G401 (cell line): ENCODE measurements at regions of chr19 and their contacts with region 1.

Region 1: GRCh38 chr19:46697204-46697960 is 19.5 kb downstream of the PRKD2 start:
- DNase-seq: peak; percentile 55

Region 2: DNA sequence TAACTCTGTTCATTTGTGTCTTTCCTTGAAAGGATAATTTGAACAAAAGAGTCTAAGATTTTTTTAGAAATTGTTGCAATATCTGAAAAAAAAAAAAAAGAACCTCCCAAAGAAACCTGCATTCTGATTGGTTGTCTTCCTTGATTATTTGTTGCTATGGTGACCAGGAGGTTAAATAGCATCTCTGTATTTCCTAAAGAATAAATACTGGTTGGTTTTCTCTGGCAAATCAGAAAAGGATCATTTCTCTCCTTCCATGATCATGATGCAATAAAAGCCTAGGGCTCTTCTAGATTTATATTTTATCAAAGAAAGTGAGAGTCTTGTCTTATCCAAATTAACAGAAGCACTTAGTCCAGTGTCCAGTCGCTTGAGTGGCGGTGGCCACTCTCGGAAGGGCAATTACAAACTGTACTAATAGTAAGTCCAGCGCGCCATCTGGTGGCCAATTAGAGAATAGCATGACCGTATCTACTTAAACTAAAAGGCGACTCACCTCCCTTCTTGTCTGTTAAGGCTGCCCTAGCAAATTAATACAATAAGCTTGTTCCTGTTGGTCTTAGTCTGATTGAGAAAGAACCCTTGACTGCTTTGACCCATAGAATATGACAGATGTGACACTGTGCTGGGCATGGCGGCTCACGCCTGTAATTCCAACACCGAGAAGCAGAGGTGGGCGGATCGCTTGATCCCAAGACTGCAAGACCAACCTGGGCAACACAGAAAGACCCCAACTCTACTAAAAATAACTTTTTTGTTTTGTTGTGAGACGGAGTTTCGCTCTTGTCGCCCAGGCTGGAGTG is 154.8 kb before region 1 on chr19:
- in situ Hi-C with region 1: loop called (anchors 25 kb)
- DNase-seq: peak; percentile 93

Region 3: GRCh38 chr19:46634045-46634655 is 63.2 kb before region 1 on chr19:
- in situ Hi-C with region 1: no loop called
- DNase-seq: peak; percentile 45

Region 4: DNA sequence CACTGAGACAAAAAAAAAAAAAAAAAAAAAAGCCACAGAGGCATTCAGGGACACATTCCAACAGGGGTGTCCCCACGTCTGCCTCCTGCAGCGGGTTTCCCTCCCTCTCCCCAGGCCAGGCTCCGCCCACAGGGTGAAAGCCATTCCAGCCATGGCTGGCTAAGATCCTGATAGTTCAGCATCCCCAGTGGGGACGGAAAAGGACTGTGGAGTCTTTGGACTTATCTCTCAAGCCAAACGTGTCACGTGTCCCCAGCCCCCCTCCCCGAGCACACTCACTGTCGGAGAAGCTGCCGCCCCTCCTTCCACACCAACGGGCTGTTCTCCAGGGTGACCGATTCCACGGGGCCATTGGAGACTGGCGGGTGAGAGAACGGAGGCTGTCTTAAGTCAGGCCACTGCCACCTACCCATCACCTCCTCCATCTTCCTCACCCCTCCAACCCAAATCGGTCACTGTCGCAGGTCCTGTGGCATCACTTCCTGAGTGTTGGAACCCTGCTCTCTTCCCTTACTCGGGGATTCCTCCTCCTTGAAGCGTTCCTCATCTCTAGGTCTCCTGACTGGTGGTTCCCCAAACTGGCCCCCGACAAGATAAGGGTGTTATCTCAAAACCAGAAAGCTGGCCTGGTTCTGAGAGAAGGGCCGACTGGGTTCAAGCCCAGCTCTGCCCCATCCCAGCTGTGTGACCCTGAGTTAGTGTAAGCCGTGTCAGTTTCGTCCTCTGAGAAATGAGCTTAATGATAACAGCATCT is 39.3 kb after region 1 on chr19:
- in situ Hi-C with region 1: no loop called
- DNase-seq: no peak